ENCODE measurements at regions of chr7 and their contacts with region 1.

Region 1: DNA sequence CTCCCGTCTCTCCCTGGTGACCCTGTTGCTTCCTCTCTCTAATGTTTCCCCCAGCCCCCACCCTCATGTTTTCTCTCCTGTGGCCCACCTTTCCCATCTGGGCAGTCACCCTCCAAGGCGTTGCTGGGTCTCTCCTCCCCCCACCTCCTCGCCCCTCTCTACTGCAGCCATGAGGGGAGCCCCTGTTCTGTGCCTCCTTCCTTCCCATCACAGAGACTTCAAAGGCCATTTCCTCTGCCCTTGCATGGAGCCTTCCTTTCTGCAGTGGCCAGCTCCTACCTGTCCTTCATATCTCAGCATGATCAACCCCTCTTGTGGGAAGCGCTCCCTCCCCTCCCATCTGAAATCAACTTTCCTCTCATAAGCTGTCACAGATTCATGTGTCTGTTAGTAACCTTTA is 194.0 kb upstream of the PRSS58 start:
- DNase-seq: no peak
- ATAC-seq: no peak
- H3K4me3 ChIP-seq: no peak overlapping the region
- H3K27ac ChIP-seq: no peak overlapping the region
- H3K4me1 ChIP-seq: no peaks in the 10 kb centered on the region
- H3K27me3 ChIP-seq: no peaks in the 10 kb centered on the region
- CTCF ChIP-seq: no peak
- POLR2A ChIP-seq: no peak
- RAD21 ChIP-seq: no peak

Region 2: DNA sequence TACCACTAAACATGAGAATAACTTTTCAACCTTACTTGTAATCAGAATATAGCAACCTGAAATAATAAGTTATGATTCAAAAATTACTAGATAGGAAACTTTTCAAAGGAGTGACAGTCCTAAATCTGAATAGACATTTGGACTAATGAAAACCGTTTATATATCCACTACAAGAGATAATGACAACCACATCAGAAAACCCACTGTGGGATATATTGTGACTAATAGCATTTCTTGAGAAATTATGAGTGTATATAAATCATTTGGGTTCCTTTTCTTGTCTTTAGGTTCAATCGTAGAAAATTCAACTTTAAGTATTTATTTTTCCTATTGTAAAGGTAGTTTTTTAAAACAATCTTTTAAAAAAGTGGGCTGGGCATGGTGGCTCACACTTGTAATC is 23.7 kb before region 1 on chr7:
- CTCF ChIA-PET with region 1: no interaction called
- POLR2A ChIA-PET with region 1: no interaction called
- dilution Hi-C with region 1: no loop called
- in situ Hi-C with region 1: no loop called
- intact Hi-C with region 1: loop called (anchors 2 kb)
- DNase-seq: no peak
- ATAC-seq: no peak
- H3K4me3 ChIP-seq: no peak overlapping the region
- H3K27ac ChIP-seq: no peak overlapping the region
- H3K4me1 ChIP-seq: peaks cover 2% of the 10 kb centered on the region; the same call in 1 of the 2 replicates
- H3K27me3 ChIP-seq: no peaks in the 10 kb centered on the region
- CTCF ChIP-seq: no peak
- POLR2A ChIP-seq: no peak
- RAD21 ChIP-seq: no peak